ENCODE measurements at regions of chr22 and their contacts with region 1.

Region 1: DNA sequence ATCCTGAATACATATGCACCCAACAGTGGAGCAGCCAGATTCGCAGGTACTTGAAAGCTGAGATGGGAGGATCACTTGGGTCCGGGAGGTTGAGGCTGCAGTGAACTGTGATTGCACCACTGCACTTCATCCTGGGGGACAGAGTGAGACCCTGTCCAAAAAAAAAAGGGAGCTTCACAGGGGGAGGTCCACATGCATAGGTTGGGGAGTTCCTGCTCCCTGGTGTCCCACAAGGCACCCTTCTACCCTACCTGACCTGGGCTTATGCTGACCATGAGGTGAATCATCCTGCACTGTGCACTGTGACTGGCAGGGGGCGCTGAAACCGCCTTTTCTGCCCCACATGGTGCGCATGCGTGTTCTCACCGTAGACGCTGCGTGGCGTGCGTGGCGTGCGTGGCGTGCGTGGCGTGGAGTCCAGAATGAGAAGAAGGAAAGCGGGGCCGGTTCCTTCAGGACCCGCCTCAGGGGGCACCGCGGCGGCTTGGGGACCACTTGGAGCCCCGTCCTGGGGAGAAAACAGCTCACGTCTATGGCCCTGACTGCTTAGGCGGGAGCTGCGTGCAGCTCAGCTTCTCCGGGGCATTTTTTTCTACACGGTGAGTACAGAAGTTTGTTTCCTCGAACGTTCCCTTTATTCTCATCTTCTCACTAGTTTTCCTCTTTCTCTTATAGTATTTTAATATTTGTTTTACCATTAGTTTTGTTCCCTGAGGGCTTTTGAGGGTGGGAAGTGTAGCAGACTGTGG is 116.6 kb upstream of the GRK3 start:
- DNase-seq: peak; percentile 75 to 93 (median 91)
- ATAC-seq: peak; percentile 97
- H3K4me3 ChIP-seq: peak overlapping the region; percentile 68 to 80
- H3K4me3 Mint-ChIP-seq: peak overlapping the region; percentile 93
- H3K27ac ChIP-seq: peak overlapping the region; percentile 70 to 71
- H3K27ac Mint-ChIP-seq: peak overlapping the region; percentile 92
- H3K4me1 ChIP-seq: peaks cover 35% of the 10 kb centered on the region
- H3K4me1 Mint-ChIP-seq: peaks cover 41% of the 10 kb centered on the region
- H3K27me3 ChIP-seq: no peaks in the 10 kb centered on the region
- H3K27me3 Mint-ChIP-seq: no peaks in the 10 kb centered on the region
- CTCF ChIP-seq: peak; percentile 91

Region 2: GRCh38 chr22:24951942-24952836 is 495.7 kb before region 1 on chr22 and contains the start of gene KIAA1671:
- CTCF ChIA-PET with region 1: no interaction called
- POLR2A ChIA-PET with region 1: no interaction called
- intact Hi-C with region 1: loop called in 1 of 2 experiments (anchors 5 kb)
- DNase-seq: peak; percentile 65 to 91 (median 84)
- ATAC-seq: peak; percentile 93
- H3K4me3 ChIP-seq: peak within 1 kb of the TSS; percentile 70 to 71
- H3K4me3 Mint-ChIP-seq: peak within 1 kb of the TSS; percentile 83
- H3K27ac ChIP-seq: no peak within 1 kb of the TSS
- H3K27ac Mint-ChIP-seq: no peak within 1 kb of the TSS
- H3K4me1 ChIP-seq: peaks cover 13% of the 10 kb centered on the region
- H3K4me1 Mint-ChIP-seq: peaks cover 21% of the 10 kb centered on the region
- H3K27me3 ChIP-seq: peaks cover 9% of the 10 kb centered on the region in 2 experiments
- H3K27me3 Mint-ChIP-seq: peaks cover 54% of the 10 kb centered on the region
- CTCF ChIP-seq: peak; percentile 86
- total RNA-seq, gene KIAA1671: 2.3 to 2.4 TPM

Region 3: GRCh38 chr22:25362215-25362882 is 85.5 kb before region 1 on chr22:
- CTCF ChIA-PET with region 1: no interaction called
- POLR2A ChIA-PET with region 1: no interaction called
- intact Hi-C with region 1: loop called in 1 of 2 experiments (anchors 1 kb)
- DNase-seq: peak; percentile 42 to 78 (median 61)
- ATAC-seq: peak; percentile 61
- H3K4me3 ChIP-seq: no peak overlapping the region
- H3K4me3 Mint-ChIP-seq: no peak overlapping the region
- H3K27ac ChIP-seq: no peak overlapping the region
- H3K27ac Mint-ChIP-seq: no peak overlapping the region
- H3K4me1 ChIP-seq: peaks cover 4% of the 10 kb centered on the region
- H3K4me1 Mint-ChIP-seq: peaks cover 2% of the 10 kb centered on the region
- H3K27me3 ChIP-seq: no peaks in the 10 kb centered on the region
- H3K27me3 Mint-ChIP-seq: no peaks in the 10 kb centered on the region
- CTCF ChIP-seq: peak; percentile 86

Region 4: DNA sequence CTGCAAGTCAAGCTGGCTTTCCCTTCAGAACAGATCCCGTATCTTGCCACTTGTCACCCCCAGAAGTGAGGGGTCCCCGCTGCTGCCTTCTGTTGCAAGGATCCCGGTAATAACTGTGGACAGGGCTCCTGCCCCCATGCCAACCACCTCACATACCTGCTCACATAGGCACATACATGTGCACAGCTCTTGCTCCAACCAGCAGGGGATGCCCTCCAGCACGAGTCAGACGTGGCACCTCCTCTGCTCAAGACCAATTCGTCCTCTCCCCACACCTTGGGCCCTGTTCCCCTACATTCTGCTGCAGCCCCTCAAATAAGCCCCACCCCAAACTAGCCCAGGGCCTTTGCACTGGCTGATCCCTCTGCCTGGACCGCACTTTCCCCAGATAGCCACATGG is 65.1 kb before region 1 on chr22:
- CTCF ChIA-PET with region 1: no interaction called
- POLR2A ChIA-PET with region 1: no interaction called
- intact Hi-C with region 1: no loop called
- DNase-seq: no peak
- ATAC-seq: no peak
- H3K4me3 ChIP-seq: no peak overlapping the region
- H3K4me3 Mint-ChIP-seq: no peak overlapping the region
- H3K27ac ChIP-seq: no peak overlapping the region
- H3K27ac Mint-ChIP-seq: no peak overlapping the region
- H3K4me1 ChIP-seq: peaks cover 22% of the 10 kb centered on the region
- H3K4me1 Mint-ChIP-seq: peaks cover 34% of the 10 kb centered on the region
- H3K27me3 ChIP-seq: no peaks in the 10 kb centered on the region
- H3K27me3 Mint-ChIP-seq: no peaks in the 10 kb centered on the region
- CTCF ChIP-seq: no peak

Region 5: DNA sequence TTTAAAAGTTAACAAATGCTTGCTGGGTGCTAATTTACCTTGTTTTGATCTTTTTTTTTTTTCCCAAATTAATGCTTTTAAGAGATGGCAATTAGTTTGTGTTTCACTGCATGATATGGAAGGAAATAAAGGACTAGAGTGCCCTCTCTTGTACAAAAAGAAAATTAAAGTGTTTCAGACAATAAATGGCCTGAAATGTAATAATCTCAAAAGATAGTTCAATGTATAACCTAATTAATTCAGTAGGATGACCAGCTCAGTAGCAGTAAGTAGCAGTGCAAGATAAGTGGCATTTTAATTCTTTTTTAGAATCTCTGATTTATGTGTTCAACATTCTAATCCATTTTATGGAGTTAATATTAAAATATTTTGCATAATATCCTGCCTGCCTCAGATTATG is 254.2 kb after region 1 on chr22:
- CTCF ChIA-PET with region 1: interaction called, 3 read pairs
- POLR2A ChIA-PET with region 1: no interaction called
- intact Hi-C with region 1: loop called (anchors 2 to 5 kb)
- DNase-seq: peak in 1 of 9 experiments; percentile 21
- ATAC-seq: no peak
- H3K4me3 ChIP-seq: no peak overlapping the region
- H3K4me3 Mint-ChIP-seq: no peak overlapping the region
- H3K27ac ChIP-seq: no peak overlapping the region
- H3K27ac Mint-ChIP-seq: no peak overlapping the region
- H3K4me1 ChIP-seq: no peaks in the 10 kb centered on the region
- H3K4me1 Mint-ChIP-seq: no peaks in the 10 kb centered on the region
- H3K27me3 ChIP-seq: no peaks in the 10 kb centered on the region
- H3K27me3 Mint-ChIP-seq: no peaks in the 10 kb centered on the region
- CTCF ChIP-seq: no peak

Region 6: DNA sequence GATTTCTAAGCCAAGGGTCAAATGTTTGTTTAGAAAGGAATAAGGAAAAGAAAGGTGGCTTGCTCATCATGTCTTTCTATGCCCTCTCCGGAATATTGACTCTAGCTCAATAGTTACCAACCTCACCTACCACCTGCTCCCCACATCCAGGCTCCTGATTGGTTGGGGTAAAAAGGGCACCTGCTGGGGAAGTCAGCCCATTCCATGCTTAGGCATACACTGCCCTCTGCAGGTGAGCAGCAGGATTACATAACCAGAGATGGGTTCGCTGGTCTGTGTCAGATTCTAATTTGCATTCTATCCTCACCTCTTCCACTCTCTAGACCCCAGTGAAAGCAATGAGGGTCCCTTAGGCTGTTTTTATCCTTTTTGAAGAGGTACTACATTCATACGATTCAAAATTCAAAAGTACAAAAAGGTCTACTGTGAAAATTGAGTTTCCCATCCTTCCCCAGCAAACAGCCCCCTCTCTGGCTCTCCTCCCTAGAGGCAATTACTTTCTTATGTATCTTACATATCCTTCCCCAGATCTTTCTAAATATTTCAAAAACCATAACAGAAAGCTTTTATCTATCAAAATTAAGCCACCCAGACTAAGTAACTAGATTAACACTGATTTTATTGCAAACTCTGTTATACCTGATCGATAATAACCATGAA is 883.2 kb after region 1 on chr22:
- CTCF ChIA-PET with region 1: interaction called, 5 read pairs
- POLR2A ChIA-PET with region 1: no interaction called
- intact Hi-C with region 1: loop called in 1 of 2 experiments (anchors 1 kb)
- DNase-seq: peak; percentile 21 to 70 (median 46)
- ATAC-seq: peak; percentile 87
- H3K4me3 ChIP-seq: no peak overlapping the region
- H3K4me3 Mint-ChIP-seq: no peak overlapping the region
- H3K27ac ChIP-seq: no peak overlapping the region
- H3K27ac Mint-ChIP-seq: no peak overlapping the region
- H3K4me1 ChIP-seq: no peaks in the 10 kb centered on the region
- H3K4me1 Mint-ChIP-seq: no peaks in the 10 kb centered on the region
- H3K27me3 ChIP-seq: no peaks in the 10 kb centered on the region
- H3K27me3 Mint-ChIP-seq: peaks cover 23% of the 10 kb centered on the region
- CTCF ChIP-seq: peak; percentile 71